Uterus (tissue), 4 donors: ENCODE measurements at regions of chr1 and their contacts with region 1.

Region 1: DNA sequence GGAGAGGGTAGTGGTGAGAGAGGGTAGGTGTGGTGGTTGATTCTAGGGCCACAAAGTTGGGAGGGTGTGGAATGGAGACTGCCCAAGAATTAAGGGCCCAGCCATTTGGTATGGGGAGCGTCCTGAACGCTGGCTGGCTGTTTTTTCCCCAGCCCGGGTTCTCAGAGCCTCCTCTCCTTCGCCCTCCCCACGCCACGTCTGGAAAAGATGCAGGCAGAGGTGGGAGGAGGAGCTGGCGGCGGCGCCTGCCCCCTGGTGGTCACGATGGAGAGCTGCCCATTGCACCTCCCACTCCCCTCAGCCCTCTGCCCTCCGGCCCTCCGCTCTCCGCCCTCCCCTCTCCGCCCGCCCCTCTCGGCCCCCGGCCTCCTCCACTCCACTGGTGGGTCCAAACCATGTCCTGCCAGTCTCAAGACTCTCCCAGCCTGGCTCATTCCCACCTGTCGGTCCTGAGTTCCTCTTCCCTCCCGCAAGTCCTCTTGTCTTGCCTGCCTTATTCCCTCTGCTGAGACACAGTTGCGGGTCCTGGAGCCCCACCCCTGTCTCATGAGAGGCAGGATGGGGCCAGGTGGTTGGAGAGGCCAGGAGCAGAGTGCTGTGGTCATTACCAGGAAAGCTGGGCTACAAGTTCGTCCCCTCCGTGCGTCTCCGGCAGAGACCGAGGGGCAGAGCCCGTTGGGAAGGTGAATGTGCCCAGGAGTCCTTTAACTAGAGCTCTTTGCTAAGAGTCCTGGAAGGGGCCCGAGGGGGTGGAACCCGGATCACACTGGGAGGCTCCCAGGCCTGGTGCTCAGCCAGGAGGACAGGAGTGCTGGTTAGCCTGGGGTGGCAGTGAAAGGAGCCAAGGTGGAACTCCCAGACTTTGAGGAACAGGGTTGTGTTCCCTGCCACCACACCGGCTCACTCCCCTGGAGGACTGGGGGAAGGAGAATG is 22.6 kb downstream of the ETNK2 start:
- DNase-seq: peak; percentile 80 to 82
- H3K4me3 ChIP-seq: peak overlapping the region; percentile 22 to 26
- H3K27ac ChIP-seq: peak overlapping the region; percentile 76 to 82
- H3K4me1 ChIP-seq: peaks cover 22 to 32% of the 10 kb centered on the region in 2 donors
- H3K27me3 ChIP-seq: no peaks in the 10 kb centered on the region
- CTCF ChIP-seq: peak; percentile 92 to 96 (median 95)
- POLR2A ChIP-seq: no peak

Region 2: GRCh38 chr1:203861379-203862184 is 267.6 kb before region 1 on chr1 and contains the start of gene SNRPE:
- intact Hi-C with region 1: loop called (anchors 2 kb)
- DNase-seq: peak; percentile 96
- H3K4me3 ChIP-seq: peak within 1 kb of the TSS; percentile 71 to 90
- H3K27ac ChIP-seq: peak within 1 kb of the TSS; percentile 71 to 72
- H3K4me1 ChIP-seq: no peaks in the 10 kb centered on the region
- H3K27me3 ChIP-seq: no peaks in the 10 kb centered on the region
- CTCF ChIP-seq: peak; percentile 91 to 99 (median 98)
- POLR2A ChIP-seq: peak; percentile 26 to 66
- total RNA-seq, gene SNRPE: 32.5 to 105 (median 103) TPM

Region 3: DNA sequence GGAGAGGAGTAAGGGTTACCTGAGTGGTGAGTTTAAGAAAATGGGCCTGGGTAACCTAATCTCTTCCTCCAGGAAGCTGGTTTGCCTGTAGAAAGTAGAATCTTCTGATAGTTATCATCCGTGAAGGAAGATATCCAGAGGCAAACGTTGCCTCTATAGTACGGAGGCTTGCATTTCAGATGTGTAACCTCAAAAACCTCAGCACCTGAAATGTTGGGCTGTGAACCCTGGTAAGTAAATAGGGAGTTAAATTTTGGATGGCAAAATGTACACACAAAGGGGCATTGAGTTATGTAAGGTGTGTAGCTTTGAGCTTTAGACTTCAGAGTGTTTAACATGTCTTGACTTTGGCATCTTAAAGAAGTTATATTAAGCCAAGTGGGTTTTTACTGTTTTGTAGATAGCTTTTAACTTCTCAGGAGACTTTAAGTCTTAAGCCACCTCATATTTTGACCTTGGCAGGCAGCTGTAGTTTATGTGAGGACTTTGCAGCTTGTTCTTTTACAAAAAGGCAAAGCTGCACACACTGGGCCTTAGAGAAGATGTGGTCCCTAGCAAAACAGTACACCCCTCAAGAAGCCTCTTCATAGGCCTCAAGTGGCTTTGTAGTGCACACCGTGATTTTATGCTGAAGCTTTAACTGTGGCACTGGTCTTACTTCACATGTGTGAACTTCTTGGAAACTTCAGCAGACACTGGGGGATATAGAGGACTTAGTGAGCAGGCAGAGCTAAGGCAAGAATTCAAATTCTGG is 184.4 kb before region 1 on chr1:
- intact Hi-C with region 1: no loop called
- DNase-seq: no peak
- H3K4me3 ChIP-seq: no peak overlapping the region
- H3K27ac ChIP-seq: no peak overlapping the region
- H3K4me1 ChIP-seq: no peaks in the 10 kb centered on the region
- H3K27me3 ChIP-seq: no peaks in the 10 kb centered on the region
- CTCF ChIP-seq: no peak
- POLR2A ChIP-seq: no peak

Region 4: DNA sequence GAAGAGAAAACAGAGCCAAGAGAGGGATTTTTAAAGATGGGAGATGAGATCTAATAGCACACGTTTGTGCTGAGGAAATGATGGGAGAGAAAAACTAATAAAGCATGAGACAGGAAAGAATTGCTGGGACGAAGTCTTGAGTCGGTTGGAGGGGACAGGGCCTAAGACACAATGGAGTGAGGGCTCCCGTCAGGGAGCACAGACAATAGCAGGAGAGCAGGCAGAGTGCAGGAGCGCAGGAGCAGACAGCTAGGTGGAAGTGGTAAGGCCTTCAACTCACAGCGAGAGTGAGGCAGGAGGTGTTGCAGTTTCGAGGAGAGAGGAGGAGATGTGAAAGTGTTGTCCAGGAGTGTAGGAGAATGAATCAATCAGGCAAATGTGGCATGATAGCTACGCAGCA is 116.2 kb before region 1 on chr1:
- intact Hi-C with region 1: no loop called
- DNase-seq: no peak
- H3K4me3 ChIP-seq: no peak overlapping the region
- H3K27ac ChIP-seq: no peak overlapping the region
- H3K4me1 ChIP-seq: no peaks in the 10 kb centered on the region
- H3K27me3 ChIP-seq: no peaks in the 10 kb centered on the region
- CTCF ChIP-seq: no peak
- POLR2A ChIP-seq: no peak

Region 5: GRCh38 chr1:204072931-204073836 is 56.0 kb before region 1 on chr1 and contains the start of gene SOX13:
- intact Hi-C with region 1: loop called (anchors 5 kb)
- DNase-seq: peak; percentile 89 to 94
- H3K4me3 ChIP-seq: peak within 1 kb of the TSS; percentile 75 to 87
- H3K27ac ChIP-seq: peak within 1 kb of the TSS; percentile 94 to 99
- H3K4me1 ChIP-seq: peaks cover 0 to 14% of the 10 kb centered on the region in 2 donors
- H3K27me3 ChIP-seq: no peaks in the 10 kb centered on the region
- CTCF ChIP-seq: peak in 2 of 4 experiments; percentile 35 to 38
- POLR2A ChIP-seq: peak; percentile 75 to 96
- total RNA-seq, gene SOX13: 15.7 to 139 (median 37.9) TPM

Region 6: DNA sequence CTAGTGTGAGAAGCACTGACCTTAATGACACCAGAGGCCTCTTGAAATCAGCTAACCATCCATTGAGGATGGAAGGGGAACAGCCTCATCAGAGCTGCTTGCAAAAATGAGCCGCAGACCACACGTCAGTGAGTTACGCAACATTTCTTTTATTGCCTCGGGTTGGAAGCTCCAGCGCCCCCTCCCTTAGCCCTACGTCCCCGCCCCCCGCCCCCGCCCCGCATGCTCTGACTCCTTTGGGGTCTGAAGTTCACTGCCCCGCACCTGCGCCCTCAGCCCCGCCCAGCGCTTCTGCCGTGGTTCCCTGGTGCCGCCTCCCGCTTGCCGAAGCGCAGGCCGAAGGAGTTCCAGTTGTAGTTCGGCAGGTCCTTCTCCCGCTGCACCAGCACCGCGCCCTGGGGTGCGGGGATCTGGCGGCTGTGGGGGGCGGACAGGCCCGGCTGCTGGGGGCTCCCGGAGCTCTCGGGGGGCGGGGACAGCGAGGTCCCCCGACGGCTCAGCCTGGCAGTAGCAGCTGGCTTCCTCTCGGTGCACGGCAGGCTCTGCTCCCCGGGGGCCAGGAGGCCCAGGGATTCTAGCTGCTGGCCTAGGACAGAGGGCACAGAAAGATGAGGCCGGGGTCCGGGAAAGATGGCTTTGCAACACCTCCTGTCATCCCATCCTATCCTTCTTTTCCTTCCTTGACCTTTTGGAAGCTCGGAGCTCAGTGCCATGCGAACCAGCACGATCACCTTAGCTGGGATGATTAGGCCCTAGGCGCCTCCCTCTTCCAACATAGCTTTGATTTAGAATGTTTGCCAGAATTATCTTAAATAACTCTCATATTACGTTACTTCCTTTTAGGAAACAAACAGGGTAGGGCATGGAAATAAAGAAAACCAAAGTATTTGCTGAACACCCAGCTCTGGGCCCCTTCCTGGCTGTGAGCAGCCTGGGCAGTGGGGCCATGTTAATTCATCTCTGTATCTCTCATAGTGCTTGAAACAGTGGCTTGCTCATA is 61.3 kb after region 1 on chr1:
- intact Hi-C with region 1: no loop called
- DNase-seq: peak; percentile 43 to 52
- H3K4me3 ChIP-seq: peak overlapping the region in 1 of 2 donors; percentile 17
- H3K27ac ChIP-seq: peak overlapping the region in 1 of 2 donors; percentile 71
- H3K4me1 ChIP-seq: peaks cover 0 to 4% of the 10 kb centered on the region in 2 donors
- H3K27me3 ChIP-seq: no peaks in the 10 kb centered on the region
- CTCF ChIP-seq: no peak
- POLR2A ChIP-seq: no peak

Region 7: GRCh38 chr1:204263254-204263910 is 134.2 kb after region 1 on chr1:
- intact Hi-C with region 1: no loop called
- DNase-seq: no peak
- H3K4me3 ChIP-seq: no peak overlapping the region
- H3K27ac ChIP-seq: no peak overlapping the region
- H3K4me1 ChIP-seq: no peaks in the 10 kb centered on the region
- H3K27me3 ChIP-seq: no peaks in the 10 kb centered on the region
- CTCF ChIP-seq: no peak
- POLR2A ChIP-seq: no peak